ENCODE measurements at regions of chr4 and their contacts with region 1.

Region 1: DNA sequence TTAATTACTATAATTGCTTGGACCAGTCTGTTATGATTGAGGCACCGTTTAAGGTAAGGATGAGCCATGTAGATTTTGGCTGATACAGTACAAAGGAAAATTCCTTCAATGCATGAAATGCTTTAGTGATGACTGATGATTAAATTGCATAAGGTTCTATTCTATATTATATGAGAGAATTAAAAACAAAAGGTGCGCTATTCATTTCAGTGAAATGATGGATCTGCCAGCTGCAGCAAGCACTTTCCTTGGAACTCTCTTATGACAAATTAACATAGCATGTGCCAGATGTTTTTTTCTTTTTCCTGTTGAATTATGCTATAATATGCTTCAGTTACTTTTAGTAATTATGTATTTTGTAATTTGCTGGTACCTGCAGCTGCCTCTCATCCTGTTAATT is 98.5 kb downstream of the JADE1 start:
- DNase-seq: no peak
- ATAC-seq: no peak
- H3K4me3 ChIP-seq: no peak overlapping the region
- H3K27ac ChIP-seq: no peak overlapping the region
- H3K4me1 ChIP-seq: no peaks in the 10 kb centered on the region
- H3K27me3 ChIP-seq: no peaks in the 10 kb centered on the region
- CTCF ChIP-seq: no peak
- POLR2A ChIP-seq: no peak
- RAD21 ChIP-seq: no peak

Region 2: GRCh38 chr4:128835498-128836222 is 72.3 kb before region 1 on chr4:
- CTCF ChIA-PET with region 1: no interaction called
- POLR2A ChIA-PET with region 1: no interaction called
- dilution Hi-C with region 1: no loop called
- in situ Hi-C with region 1: no loop called
- intact Hi-C with region 1: no loop called
- DNase-seq: no peak
- ATAC-seq: peak; percentile 24
- H3K4me3 ChIP-seq: no peak overlapping the region
- H3K27ac ChIP-seq: no peak overlapping the region
- H3K4me1 ChIP-seq: peaks cover 20% of the 10 kb centered on the region
- H3K27me3 ChIP-seq: no peaks in the 10 kb centered on the region
- CTCF ChIP-seq: no peak
- POLR2A ChIP-seq: no peak
- RAD21 ChIP-seq: no peak

Region 3: GRCh38 chr4:128921954-128922353 is 14.0 kb after region 1 on chr4:
- CTCF ChIA-PET with region 1: no interaction called
- POLR2A ChIA-PET with region 1: no interaction called
- dilution Hi-C with region 1: no loop called
- in situ Hi-C with region 1: no loop called
- intact Hi-C with region 1: loop called (anchors 2 kb)
- DNase-seq: no peak
- ATAC-seq: no peak
- H3K4me3 ChIP-seq: no peak overlapping the region
- H3K27ac ChIP-seq: no peak overlapping the region
- H3K4me1 ChIP-seq: no peaks in the 10 kb centered on the region
- H3K27me3 ChIP-seq: no peaks in the 10 kb centered on the region
- CTCF ChIP-seq: no peak
- POLR2A ChIP-seq: no peak
- RAD21 ChIP-seq: no peak

Measured in IMR-90 (cell line).